PC-3 (cell line): ENCODE measurements at regions of chr14 and their contacts with region 1.

Region 1: DNA sequence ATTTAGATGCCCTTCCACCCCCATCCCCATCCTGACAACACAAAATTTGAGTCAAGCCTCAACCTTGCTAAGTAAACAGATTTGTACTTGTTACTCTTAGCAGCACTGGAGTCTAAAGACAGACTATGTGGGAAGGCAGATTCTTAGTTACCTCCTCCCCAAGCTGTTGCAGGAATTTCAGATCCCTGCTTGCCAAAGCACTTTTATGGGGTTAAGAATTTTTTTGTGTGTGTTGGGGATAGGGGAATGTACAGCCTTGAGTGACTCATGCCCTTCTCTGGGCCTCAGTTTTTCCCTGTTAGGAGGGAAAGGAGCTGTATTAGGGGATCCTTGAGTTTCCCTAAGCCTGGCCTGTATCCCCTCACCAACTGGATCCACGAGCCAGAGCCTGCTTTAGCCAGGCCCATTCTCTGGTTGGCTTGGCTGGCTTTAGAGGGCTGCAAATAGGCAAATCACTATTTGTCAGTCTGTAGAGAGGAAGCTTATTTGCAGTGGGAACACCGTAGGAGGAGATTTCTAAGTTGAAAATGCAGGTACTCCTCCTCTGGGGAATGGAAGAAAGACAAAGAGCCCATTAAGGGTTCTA is 27.7 kb upstream of the RNU6-8 start:
- DNase-seq: peak; percentile 73
- ATAC-seq: peak; percentile 62
- H3K4me3 ChIP-seq: peak overlapping the region; percentile 26; the same call in 1 of the 2 replicates
- H3K27ac ChIP-seq: peak overlapping the region; percentile 77
- H3K4me1 ChIP-seq: peaks cover 50% of the 10 kb centered on the region
- H3K27me3 ChIP-seq: no peaks in the 10 kb centered on the region
- CTCF ChIP-seq: no peak

Region 2: DNA sequence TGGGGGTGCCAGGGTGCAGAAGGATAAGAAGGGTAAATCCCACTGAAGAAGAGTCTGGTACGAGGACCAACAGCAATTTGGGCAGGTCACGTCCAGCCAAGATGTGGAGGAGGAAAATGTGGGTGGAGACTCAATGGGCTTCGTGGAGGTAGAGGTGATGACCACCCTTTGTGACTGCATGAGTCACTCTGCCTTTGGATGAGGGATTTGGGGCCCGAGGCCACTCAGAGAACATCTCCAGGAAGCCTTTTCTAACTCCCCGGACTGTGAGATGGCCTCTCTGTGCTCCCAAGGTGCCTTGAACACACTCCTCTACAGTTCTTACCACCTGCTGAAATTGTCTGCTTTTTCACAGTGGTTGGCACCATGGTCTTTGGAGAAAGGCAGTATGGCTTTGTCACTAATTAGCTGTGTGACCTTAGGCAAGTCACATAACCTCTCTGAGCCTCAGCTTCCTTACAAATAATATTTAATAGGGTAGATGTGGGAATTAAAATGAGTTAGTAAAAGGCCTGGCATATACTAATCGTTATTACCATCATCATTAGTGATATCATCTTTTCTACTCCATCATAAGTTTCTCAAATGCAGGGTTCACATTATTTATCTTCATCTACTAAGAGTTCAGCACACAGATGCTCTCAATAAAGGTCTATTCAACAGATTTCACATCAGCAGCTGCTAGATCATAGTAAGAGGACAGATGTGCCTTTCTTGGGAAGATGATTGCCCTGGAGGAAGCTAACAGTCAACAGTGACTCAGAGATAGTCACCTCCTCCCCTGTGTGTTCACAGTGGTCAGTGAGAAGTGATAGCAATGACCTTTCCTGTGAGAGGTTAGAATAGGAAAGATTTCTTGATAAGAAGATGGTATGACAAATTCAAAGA is 220.6 kb before region 1 on chr14:
- CTCF ChIA-PET with region 1: no interaction called
- POLR2A ChIA-PET with region 1: no interaction called
- intact Hi-C with region 1: loop called (anchors 5 kb)
- DNase-seq: peak; percentile 95
- ATAC-seq: peak; percentile 71
- H3K4me3 ChIP-seq: no peak overlapping the region
- H3K27ac ChIP-seq: peak overlapping the region; percentile 88
- H3K4me1 ChIP-seq: peaks cover 61% of the 10 kb centered on the region
- H3K27me3 ChIP-seq: no peaks in the 10 kb centered on the region
- CTCF ChIP-seq: no peak

Region 3: DNA sequence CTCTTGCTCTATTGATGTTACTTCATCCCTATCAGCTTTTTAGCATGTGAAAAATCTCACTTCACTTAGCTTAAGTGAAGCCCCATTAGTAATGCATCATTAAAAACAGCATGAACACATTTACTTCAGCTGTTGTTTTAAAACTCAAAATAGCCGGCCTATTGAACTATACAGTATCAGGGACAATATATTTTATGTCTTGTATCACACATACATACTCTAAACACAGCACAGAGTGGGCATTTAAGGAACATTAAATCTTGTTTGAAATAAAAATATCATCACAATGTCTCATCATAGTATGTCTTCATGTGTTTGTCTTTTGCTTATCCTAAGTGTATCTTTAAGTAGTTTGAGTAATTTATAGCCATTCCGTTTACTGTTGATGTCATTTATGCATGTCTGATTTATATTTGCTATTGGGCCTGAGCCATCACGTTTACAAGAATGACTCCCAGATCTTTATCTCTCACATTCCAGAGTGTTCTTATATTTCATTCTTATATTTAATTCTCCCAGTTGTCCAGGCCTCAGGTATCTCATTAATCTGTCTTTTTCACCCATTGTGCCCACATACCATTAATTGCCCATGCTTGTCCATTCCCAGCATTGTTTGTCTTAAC is 96.2 kb before region 1 on chr14:
- CTCF ChIA-PET with region 1: no interaction called
- POLR2A ChIA-PET with region 1: no interaction called
- intact Hi-C with region 1: loop called (anchors 5 kb)
- DNase-seq: peak; percentile 93
- ATAC-seq: peak; percentile 92
- H3K4me3 ChIP-seq: no peak overlapping the region
- H3K27ac ChIP-seq: peak overlapping the region; percentile 79
- H3K4me1 ChIP-seq: peaks cover 23% of the 10 kb centered on the region
- H3K27me3 ChIP-seq: no peaks in the 10 kb centered on the region
- CTCF ChIP-seq: no peak

Region 4: GRCh38 chr14:32190672-32191071 is 40.1 kb before region 1 on chr14:
- CTCF ChIA-PET with region 1: no interaction called
- POLR2A ChIA-PET with region 1: no interaction called
- intact Hi-C with region 1: no loop called
- DNase-seq: no peak
- ATAC-seq: no peak
- H3K4me3 ChIP-seq: no peak overlapping the region
- H3K27ac ChIP-seq: no peak overlapping the region
- H3K4me1 ChIP-seq: no peaks in the 10 kb centered on the region
- H3K27me3 ChIP-seq: no peaks in the 10 kb centered on the region
- CTCF ChIP-seq: no peak

Region 5: GRCh38 chr14:32202998-32203882 is 27.5 kb before region 1 on chr14 and contains the start of gene RNU6-8:
- CTCF ChIA-PET with region 1: no interaction called
- POLR2A ChIA-PET with region 1: no interaction called
- intact Hi-C with region 1: loop called (anchors 1 kb)
- DNase-seq: peak; percentile 92
- ATAC-seq: peak; percentile 68
- H3K4me3 ChIP-seq: peak within 1 kb of the TSS; percentile 87
- H3K27ac ChIP-seq: peak within 1 kb of the TSS; percentile 65
- H3K4me1 ChIP-seq: peaks cover 21% of the 10 kb centered on the region; the same call in 1 of the 2 replicates
- H3K27me3 ChIP-seq: no peaks in the 10 kb centered on the region
- CTCF ChIP-seq: no peak
- total RNA-seq, gene RNU6-8: not detected in 2 replicates